ENCODE measurements at regions of chr22 and their contacts with region 1.

Region 1: GRCh38 chr22:28989035-28989464 is 72.6 kb downstream of the C22orf31 start:
- DNase-seq: peak in 6 of 10 donors; percentile 21 to 71 (median 60)
- H3K4me3 ChIP-seq: no peak overlapping the region
- H3K27ac ChIP-seq: peak overlapping the region in 50 of 59 donors; percentile 3 to 87 (median 70)
- H3K27me3 ChIP-seq: no peaks in the 10 kb centered on the region
- CTCF ChIP-seq: no peak

Region 2: DNA sequence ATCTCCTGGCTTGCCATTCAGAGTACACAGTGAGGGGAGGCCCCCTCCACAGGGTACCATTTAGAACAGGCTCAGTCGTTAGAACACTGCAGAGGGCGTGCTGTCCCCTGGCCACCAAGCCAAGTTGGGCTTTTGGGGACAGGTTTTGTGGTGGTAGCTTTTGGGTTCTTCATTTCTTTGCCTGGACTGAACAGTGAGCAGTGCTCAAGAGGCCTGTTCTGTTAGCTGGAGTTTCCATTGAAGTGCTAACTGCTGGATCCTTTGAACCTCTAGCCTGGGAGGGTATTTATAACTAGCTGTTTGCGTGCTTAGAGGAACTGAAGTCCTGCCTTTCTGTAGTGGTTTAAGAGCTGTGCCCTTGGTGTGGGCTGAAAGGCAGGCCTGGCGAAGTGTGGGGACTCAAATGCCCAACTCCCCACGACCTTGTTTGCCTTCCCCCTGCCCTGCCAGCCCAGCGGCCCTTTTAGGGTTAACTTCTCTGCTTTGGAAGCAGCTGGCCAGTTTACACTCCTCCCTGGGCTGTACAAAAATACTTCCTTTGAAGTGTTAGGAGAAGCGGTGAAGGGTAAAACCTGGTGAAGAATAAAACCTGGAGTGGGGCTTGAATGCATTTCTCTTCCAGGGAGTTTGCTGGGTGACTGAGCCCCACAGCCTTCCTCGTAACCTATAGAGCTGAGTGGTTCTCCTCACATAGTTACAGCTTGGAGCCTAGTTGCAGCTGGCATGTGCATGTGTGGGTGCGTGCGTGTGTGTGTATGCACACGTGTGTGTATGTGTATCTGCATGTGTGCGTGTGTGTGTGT is 71.1 kb before region 1 on chr22:
- intact Hi-C with region 1: loop called in 1 of 2 experiments (anchors 5 kb)
- DNase-seq: peak in 1 of 10 donors; percentile 26
- H3K4me3 ChIP-seq: peak overlapping the region in 8 of 59 donors; percentile 0 to 27 (median 14)
- H3K27ac ChIP-seq: peak overlapping the region in 58 of 59 donors; percentile 6 to 94 (median 82)
- H3K27me3 ChIP-seq: no peaks in the 10 kb centered on the region
- CTCF ChIP-seq: no peak

Region 3: GRCh38 chr22:29030623-29031226 is 41.7 kb after region 1 on chr22:
- intact Hi-C with region 1: no loop called
- DNase-seq: peak in 6 of 10 donors; percentile 37 to 84 (median 56)
- H3K4me3 ChIP-seq: peak overlapping the region in 57 of 59 donors; percentile 18 to 64 (median 46)
- H3K27ac ChIP-seq: peak overlapping the region in 55 of 59 donors; percentile 13 to 97 (median 85)
- H3K27me3 ChIP-seq: no peaks in the 10 kb centered on the region
- CTCF ChIP-seq: no peak

Measured in dorsolateral prefrontal cortex (tissue), 120 donors.